Sigmoid colon (tissue), 7 donors: ENCODE measurements at regions of chr2 and their contacts with region 1.

Region 1: DNA sequence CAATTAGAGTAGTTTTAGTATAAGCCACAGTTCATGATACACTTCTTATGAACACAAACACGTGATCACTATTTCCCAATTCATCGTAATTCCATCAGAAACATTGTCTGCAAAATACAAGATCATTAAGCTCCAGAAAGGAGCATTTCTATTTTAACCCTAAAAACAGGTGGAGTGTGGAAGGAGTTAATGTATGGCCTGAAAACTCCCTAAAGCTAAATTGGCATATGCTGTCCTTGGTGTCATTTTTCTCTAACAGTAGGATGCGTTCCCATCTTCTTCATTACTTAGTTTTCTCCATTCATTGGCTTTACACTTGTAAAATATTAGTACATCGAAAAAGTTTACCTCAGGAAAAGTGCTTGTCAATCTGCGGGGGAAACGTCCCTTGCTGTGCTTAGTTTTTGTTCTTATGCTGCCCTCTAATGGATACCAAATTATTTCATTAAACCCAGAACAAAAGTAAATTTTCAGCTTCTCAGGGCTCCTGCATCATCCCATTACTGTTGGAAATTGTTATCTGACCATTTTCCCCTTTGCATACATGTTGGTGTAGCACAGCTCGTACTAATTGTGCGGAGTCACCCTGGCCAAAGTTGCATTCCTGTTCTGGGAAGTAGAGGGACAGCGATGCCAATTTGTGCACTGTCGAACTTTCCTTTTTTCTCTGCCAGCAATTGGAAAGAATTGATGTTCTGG is 153.4 kb downstream of the GPD2 start:
- DNase-seq: no peak
- H3K4me3 ChIP-seq: no peak overlapping the region
- H3K27ac ChIP-seq: no peak overlapping the region
- H3K4me1 ChIP-seq: peaks cover 0 to 5% (median 2%) of the 10 kb centered on the region in 4 donors
- H3K27me3 ChIP-seq: no peaks in the 10 kb centered on the region
- CTCF ChIP-seq: peak in 3 of 4 experiments; percentile 25 to 53 (median 26)
- EP300 ChIP-seq: no peak
- POLR2A ChIP-seq: no peak

Region 2: DNA sequence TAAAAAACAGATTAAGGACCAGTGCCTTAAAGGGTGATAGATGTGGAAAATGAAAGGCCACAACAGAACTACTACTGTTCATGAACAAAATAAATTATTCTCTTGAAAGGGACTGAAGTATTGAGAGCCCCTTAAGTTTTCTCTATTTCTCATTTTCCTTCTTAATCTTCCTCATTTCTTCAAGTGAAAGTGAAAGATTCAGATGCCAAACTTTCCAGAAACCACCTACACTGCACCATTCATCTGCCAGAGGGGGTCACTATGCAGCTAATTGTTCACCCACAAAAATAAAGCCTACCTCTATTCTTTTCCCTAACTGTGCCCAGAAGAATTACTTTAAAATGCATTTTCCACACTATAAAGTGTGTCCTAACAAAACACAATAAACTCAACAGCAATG is 397.1 kb before region 1 on chr2:
- intact Hi-C with region 1: loop called (anchors 5 kb)
- DNase-seq: no peak
- H3K4me3 ChIP-seq: no peak overlapping the region
- H3K27ac ChIP-seq: no peak overlapping the region
- H3K4me1 ChIP-seq: no peaks in the 10 kb centered on the region
- H3K27me3 ChIP-seq: no peaks in the 10 kb centered on the region
- CTCF ChIP-seq: no peak
- EP300 ChIP-seq: no peak
- POLR2A ChIP-seq: no peak

Region 3: DNA sequence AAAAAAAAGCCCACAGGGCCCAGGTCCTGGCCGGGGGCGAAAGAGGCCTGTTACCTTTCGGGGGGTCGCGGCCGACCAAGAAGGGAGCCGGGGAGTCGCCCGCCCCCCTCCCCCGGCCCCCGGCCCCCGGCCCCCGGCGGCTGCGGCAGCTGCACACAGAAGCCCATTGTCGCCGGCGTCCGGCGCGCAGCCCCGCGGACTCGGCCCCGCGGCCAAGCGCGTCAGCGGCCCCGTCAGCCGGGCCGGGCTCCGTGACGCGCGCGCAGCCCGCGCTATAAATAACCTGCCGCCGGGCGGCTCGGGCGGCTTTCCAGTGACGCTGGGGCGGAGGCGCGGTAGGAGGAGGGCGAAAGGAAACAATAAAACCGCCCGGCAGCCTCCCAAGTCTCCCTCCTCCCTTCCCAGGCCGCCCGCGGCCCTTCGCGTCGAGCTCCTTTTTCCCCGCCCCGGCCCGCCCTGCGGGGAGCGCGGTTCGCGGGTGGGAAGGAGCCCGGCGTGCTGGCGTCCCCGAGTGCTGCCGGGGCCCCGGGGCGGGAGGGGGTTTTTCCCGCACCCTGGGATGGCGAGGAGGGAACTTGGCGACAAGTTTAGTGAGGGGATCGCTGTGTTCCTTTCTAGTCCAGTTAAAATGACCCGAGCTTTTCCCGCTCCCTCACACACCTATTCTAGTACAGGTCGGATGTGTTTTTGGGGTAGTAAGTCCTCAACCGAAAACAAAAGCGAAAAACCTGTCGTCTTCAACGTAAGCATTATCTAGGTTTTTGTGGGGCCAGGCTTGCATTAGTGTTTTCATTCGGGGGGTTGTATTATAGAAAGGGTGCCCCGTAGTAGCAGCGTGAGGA is 247.1 kb before region 1 on chr2:
- intact Hi-C with region 1: loop called (anchors 5 kb)
- DNase-seq: peak; percentile 99
- H3K4me3 ChIP-seq: peak overlapping the region; percentile 78 to 99 (median 93)
- H3K27ac ChIP-seq: peak overlapping the region; percentile 97 to 100 (median 100)
- H3K4me1 ChIP-seq: peaks cover 0 to 12% (median 11%) of the 10 kb centered on the region in 4 donors
- H3K27me3 ChIP-seq: no peaks in the 10 kb centered on the region
- CTCF ChIP-seq: no peak
- EP300 ChIP-seq: peak; percentile 68 to 89 (median 81)
- POLR2A ChIP-seq: peak; percentile 51 to 75

Region 4: DNA sequence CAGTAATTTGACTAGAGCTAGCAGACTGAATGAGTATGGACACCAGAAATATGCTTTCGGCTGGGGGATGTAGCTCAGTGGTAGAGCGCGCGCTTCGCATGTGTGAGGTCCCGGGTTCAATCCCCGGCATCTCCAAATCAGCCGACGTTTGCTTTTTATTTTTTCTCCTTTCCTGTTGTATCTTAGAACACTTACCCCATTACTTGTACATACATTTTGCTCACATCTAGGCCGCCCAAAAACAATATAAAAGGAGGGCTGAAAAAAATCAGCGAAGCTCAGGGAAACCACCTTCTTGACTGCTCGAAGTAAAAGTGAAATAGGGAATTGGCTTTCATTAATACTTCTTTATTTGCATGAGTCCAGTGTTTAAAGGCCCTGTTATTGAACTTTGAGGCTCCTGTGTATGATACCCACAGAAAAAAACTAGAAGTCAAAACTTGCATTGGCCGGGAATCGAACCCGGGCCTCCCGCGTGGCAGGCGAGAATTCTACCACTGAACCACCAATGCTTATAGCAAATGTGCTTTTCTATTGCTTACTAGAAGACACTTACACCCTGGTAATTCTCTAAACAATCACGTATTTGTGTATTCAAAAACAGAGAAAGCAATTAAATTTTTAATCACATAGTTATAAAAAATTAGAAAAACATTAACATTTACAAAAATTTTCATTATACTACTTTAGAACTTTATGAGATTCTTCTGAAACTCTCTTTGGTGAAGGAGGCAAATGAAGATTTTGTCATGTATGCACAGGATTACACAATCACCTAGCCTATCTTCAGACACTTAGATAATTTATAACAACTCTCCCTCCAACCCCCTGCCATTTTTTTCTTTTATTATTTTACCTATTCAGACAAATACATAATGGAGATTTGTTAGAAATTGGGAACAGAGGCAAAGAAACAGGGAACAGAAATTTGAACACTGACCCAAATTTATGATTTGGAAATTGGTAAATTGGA is 188.5 kb before region 1 on chr2:
- intact Hi-C with region 1: loop called (anchors 10 kb)
- DNase-seq: peak; percentile 89
- H3K4me3 ChIP-seq: peak overlapping the region; percentile 60 to 73 (median 64)
- H3K27ac ChIP-seq: peak overlapping the region; percentile 89 to 94 (median 90)
- H3K4me1 ChIP-seq: peaks cover 3 to 8% (median 5%) of the 10 kb centered on the region in 4 donors
- H3K27me3 ChIP-seq: no peaks in the 10 kb centered on the region
- CTCF ChIP-seq: no peak
- EP300 ChIP-seq: no peak
- POLR2A ChIP-seq: no peak